HEK293T (cell line): ENCODE measurements at regions of chr2 and their contacts with region 1.

Region 1: GRCh38 chr2:120174963-120175581 is 48.1 kb downstream of the TMEM185B start:
- DNase-seq: peak; percentile 61

Region 2: GRCh38 chr2:119702918-119703401 is 472.1 kb before region 1 on chr2:
- CTCF ChIA-PET with region 1: interaction called, 12 read pairs
- POLR2A ChIA-PET with region 1: no interaction called
- DNase-seq: peak; percentile 91

Region 3: DNA sequence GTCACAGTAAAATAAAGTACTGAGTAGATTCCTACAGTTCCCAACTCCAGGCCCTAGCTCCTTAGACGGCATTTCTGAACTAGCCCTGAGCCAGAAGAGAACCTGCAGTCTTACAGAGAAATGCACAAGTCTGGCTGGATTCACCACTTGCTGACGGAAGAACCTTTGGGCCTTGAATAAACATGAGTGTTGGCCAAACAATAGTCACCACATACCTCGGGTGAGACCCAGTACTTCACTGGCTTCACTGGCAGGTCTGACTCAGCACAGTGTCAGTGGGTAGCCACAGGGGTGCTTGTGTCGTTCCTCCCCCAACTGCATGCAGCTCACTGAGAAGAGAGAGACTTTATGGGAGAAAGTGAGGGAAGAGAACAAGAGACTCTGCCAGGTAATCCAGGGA is 40.8 kb before region 1 on chr2:
- CTCF ChIA-PET with region 1: no interaction called
- POLR2A ChIA-PET with region 1: no interaction called
- DNase-seq: no peak